ENCODE measurements at regions of chr10 and their contacts with region 1.

Region 1: DNA sequence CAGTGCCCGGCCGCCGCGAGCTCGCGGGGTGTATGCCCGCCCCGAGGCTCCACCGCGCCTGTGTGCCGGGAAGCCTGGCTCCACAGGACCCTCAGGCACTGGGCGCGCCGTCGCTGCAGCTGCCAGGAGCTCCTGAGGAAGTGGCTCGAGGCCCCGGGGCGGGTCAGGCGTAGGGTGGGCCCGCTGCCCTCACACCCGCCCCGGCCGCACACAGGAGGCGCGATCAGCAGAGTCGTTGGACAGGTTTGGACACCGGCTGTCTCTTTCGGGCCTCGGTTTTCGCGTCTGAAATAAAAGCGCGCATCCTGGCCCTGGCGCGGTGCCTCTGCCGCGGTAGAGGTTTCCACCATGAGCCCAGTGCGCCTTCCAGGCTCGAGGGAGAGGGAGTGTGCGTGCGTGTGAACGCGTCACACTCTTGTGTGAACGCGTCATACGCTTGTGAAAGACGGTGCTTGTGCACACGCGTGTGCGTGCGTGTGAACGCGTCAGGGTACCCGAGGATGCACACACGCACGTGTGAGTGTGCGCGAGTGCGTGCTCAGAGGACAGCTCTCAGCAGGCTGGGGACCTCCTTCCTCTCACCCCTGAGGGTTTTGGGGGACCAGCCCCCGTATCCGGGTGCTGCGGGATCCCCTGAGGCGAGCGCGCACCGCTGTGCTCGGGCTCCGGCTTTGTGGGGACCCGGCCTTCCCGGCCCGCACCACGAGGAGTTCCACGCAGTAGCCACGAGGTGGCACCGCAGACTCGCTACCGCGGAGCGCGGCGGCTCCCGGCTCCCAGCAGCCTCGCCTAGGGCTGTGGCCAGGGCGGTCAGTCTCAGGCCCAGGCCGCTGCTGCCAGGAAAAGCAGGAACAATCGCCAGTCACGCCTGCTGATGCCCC is 83.8 kb downstream of the BMS1 start:
- DNase-seq: peak; percentile 64 to 79
- H3K4me3 ChIP-seq: peak overlapping the region in 1 of 2 donors; percentile 20
- H3K27ac ChIP-seq: no peak overlapping the region
- H3K4me1 ChIP-seq: peaks cover 0 to 13% (median 8%) of the 10 kb centered on the region in 4 donors
- H3K27me3 ChIP-seq: peaks cover 0 to 32% of the 10 kb centered on the region in 2 donors
- CTCF ChIP-seq: peak; percentile 61 to 70

Region 2: GRCh38 chr10:43105102-43105785 is 238.9 kb after region 1 on chr10:
- intact Hi-C with region 1: loop called (anchors 5 kb)
- DNase-seq: peak; percentile 64 to 83
- H3K4me3 ChIP-seq: peak overlapping the region; percentile 49 to 62
- H3K27ac ChIP-seq: no peak overlapping the region
- H3K4me1 ChIP-seq: peaks cover 0 to 15% (median 11%) of the 10 kb centered on the region in 4 donors
- H3K27me3 ChIP-seq: peaks cover 0 to 44% of the 10 kb centered on the region in 2 donors
- CTCF ChIP-seq: peak; percentile 98 to 100